ENCODE measurements at regions of chr17 and their contacts with region 1.

Region 1: DNA sequence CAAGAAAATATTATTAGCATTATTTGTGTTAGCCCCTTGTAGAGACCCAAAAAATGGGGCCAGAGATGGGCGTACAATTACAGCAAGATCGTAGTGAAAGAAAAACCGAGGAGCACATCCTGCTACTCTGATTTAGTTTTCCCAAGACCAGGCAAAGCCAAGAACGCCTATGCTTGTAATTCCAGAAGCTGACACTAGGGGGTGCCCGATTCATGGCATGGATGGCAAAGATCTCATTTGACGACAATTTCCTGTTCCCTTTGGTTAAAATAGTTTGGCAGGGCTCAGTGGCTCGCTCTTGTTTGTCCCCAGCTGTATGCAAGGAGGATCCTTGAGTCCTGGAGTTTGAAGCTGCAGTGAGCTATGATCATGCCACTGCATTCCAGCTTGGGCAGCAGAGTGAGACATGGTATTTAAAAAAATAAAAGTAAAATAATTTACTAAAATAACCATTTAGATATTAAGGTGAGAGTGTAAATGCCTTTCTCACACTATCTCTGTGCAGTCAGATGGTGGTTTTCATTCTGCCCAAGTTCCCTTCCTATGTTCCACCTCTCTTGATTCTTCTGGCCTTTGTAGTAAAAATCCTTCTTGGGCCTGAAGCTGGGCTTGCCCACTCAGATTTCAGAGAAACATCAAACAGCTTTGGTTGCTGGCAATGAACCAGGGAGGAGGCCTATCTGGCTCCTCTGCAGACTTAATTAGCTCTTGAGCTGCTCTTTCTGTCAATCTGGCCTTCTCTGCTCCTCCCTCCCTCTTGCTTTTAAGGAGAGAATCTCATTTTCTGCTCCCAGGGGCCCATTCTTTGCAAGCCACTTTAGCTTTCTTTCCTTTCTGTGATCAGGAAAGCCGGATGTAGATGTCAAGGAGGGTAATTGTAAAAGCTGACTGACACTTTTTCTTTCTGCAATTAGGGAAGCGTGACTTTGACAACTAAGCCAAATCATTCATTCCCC is 31.2 kb downstream of the TMEM238L start:
- DNase-seq: peak; percentile 53 to 97
- H3K4me3 ChIP-seq: no peak overlapping the region
- H3K27ac ChIP-seq: no peak overlapping the region
- H3K4me1 ChIP-seq: no peaks in the 10 kb centered on the region; a peak in 1 of 7 replicates
- H3K27me3 ChIP-seq: no peaks in the 10 kb centered on the region
- CTCF ChIP-seq: peak; percentile 64 to 95 (median 84)
- EP300 ChIP-seq: no peak
- POLR2A ChIP-seq: no peak
- RAD21 ChIP-seq: peak; percentile 88 to 91

Region 2: GRCh38 chr17:10737168-10737622 is 35.5 kb before region 1 on chr17:
- CTCF ChIA-PET with region 1: interaction called, 29 read pairs
- POLR2A ChIA-PET with region 1: no interaction called
- DNase-seq: peak in 1 of 2 experiments; percentile 66
- H3K4me3 ChIP-seq: no peak overlapping the region
- H3K27ac ChIP-seq: no peak overlapping the region
- H3K4me1 ChIP-seq: no peaks in the 10 kb centered on the region
- H3K27me3 ChIP-seq: no peaks in the 10 kb centered on the region
- CTCF ChIP-seq: peak; percentile 68 to 81 (median 80)
- EP300 ChIP-seq: no peak
- POLR2A ChIP-seq: no peak
- RAD21 ChIP-seq: peak; percentile 94

Region 3: DNA sequence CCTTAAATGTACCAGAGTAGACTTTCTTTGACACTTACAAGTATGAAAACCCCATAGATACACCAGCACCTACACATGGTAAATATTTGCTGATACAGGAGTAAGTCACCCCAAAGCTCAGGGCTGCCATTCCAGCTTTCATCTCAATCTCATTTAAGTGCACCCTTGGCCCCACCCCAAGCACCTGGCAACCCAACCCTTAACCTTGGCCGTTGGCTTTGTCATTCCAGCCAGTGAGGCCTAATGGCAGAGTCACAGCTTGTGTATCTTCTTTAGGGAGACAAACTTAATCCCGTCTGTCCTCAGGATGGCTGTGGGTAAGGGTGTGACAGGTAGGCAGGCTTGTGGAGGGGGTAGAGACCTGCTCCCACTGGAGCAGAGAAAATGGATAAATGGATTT is 11.4 kb before region 1 on chr17:
- CTCF ChIA-PET with region 1: interaction called, 30 read pairs
- POLR2A ChIA-PET with region 1: no interaction called
- DNase-seq: no peak
- H3K4me3 ChIP-seq: no peak overlapping the region
- H3K27ac ChIP-seq: no peak overlapping the region
- H3K4me1 ChIP-seq: peaks cover 3 to 12% (median 5%) of the 10 kb centered on the region in 4 experiments; a peak in 6 of 7 replicates
- H3K27me3 ChIP-seq: no peaks in the 10 kb centered on the region
- CTCF ChIP-seq: no peak
- EP300 ChIP-seq: no peak
- POLR2A ChIP-seq: no peak
- RAD21 ChIP-seq: no peak

Region 4: DNA sequence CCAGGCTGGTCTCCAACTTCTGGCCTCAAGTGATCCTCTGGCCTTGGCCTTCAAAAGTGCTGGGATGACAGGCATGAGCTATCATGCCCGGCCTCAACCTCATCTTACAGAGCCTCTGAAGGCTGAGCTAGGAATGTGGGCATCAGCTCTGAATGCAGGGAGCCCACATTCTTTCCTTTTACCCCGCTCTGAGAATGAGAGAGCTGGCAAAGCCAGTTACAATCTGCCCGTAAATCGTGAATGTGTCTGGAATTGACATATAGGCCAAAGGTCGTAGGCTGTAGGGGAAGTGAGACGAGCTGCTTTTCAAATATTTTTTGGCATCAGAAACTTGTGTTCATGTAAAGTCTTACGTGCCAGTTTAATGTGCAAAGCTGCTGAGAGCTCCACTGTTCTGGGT is 26.7 kb after region 1 on chr17:
- CTCF ChIA-PET with region 1: interaction called, 10 read pairs
- POLR2A ChIA-PET with region 1: interaction called, 4 read pairs
- DNase-seq: no peak
- H3K4me3 ChIP-seq: no peak overlapping the region
- H3K27ac ChIP-seq: no peak overlapping the region
- H3K4me1 ChIP-seq: peaks cover 0 to 4% (median 1%) of the 10 kb centered on the region in 4 experiments; a peak in 1 of 7 replicates
- H3K27me3 ChIP-seq: no peaks in the 10 kb centered on the region
- CTCF ChIP-seq: no peak
- EP300 ChIP-seq: no peak
- POLR2A ChIP-seq: no peak
- RAD21 ChIP-seq: no peak

Region 5: DNA sequence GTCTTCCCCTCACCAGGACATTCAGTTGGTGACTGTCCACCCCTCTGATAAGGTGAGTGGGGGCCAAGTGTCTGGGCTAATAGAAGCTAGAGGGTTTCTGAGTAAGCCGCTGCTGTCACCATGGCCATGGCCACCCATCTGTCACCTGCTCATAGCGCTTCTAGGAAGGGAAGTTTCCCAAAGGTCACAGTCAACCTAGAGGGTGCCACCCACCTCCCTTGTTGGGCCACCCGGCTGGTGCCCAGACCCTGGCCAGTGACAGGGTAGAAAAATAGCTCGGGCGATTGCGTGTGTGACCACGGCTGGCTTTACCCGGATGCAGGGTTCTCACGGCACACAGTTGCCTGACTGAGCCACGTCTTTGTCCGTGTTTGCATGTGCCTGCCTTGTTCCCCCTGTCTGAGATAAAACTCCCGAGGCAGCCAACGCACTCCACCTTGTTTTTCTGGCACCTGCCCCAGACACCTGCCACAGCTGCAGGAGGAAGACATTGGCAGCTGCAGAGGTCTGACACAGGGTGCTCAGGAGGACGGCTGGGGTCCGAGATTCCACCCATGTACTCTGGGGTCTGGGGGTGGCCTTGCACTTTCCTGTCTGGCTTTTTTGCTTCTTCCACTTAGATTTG is 64.4 kb after region 1 on chr17:
- CTCF ChIA-PET with region 1: interaction called, 57 read pairs
- POLR2A ChIA-PET with region 1: interaction called, 3 read pairs
- DNase-seq: no peak
- H3K4me3 ChIP-seq: no peak overlapping the region
- H3K27ac ChIP-seq: no peak overlapping the region
- H3K4me1 ChIP-seq: peaks cover 0 to 5% (median 0%) of the 10 kb centered on the region in 4 experiments; a peak in 2 of 7 replicates
- H3K27me3 ChIP-seq: no peaks in the 10 kb centered on the region
- CTCF ChIP-seq: no peak
- EP300 ChIP-seq: no peak
- POLR2A ChIP-seq: no peak
- RAD21 ChIP-seq: no peak

Region 6: DNA sequence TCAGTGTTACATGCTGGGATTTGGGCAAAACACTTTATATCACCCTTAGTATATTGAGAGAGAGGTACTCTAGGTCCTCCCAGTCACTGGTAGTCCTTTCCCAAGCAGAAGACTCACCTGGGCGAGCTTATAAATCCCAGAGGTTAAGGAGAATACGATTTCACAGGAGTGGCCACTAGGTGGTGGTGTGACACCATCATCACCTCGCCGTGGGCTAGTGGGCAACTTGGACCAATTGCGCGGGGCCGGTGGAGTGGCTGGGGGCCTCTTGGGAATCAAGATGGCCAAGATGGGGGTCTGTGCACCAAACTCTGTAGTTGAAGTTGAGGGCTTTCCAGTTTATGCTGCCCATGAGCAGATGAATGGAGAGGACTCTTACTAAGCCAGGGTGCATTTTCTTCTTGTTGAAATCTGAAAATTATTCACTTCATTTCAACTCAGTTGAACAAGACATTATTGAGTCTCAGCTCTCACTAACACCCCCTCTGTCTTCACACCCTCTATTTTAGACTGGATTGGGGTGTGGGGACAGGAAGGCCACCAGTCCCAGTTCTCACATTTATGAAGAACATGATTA is 103.4 kb after region 1 on chr17:
- CTCF ChIA-PET with region 1: interaction called, 18 read pairs
- POLR2A ChIA-PET with region 1: no interaction called
- DNase-seq: peak in 1 of 2 experiments; percentile 88
- H3K4me3 ChIP-seq: no peak overlapping the region
- H3K27ac ChIP-seq: no peak overlapping the region
- H3K4me1 ChIP-seq: no peaks in the 10 kb centered on the region
- H3K27me3 ChIP-seq: no peaks in the 10 kb centered on the region
- CTCF ChIP-seq: peak; percentile 74 to 83 (median 75)
- EP300 ChIP-seq: no peak
- POLR2A ChIP-seq: no peak
- RAD21 ChIP-seq: peak; percentile 91 to 96

Region 7: DNA sequence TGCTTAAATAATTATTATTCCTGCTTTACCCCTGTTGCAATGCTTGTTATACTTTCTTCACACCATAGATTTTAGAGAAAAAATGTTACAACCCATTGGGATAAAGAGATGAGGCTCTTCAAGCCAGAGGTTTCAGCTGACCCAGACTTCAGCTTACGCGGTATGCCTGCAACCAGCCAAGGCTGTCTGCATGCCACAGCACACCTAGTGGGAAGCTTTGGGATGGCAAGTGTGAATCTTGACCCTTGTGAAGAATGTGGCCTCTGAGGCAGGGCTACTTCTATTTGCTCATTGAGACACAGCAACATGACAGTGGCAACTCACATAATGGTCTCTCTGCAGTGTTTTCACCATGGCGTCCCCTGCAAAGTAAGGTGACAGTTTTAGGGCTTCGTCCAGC is 259.1 kb after region 1 on chr17:
- CTCF ChIA-PET with region 1: no interaction called
- POLR2A ChIA-PET with region 1: no interaction called
- DNase-seq: peak; percentile 17 to 72
- H3K4me3 ChIP-seq: no peak overlapping the region
- H3K27ac ChIP-seq: no peak overlapping the region
- H3K4me1 ChIP-seq: peaks cover 0 to 6% (median 0%) of the 10 kb centered on the region in 4 experiments; a peak in 1 of 7 replicates
- H3K27me3 ChIP-seq: no peaks in the 10 kb centered on the region
- CTCF ChIP-seq: peak; percentile 58 to 94 (median 81)
- EP300 ChIP-seq: no peak
- POLR2A ChIP-seq: no peak
- RAD21 ChIP-seq: peak; percentile 64 to 73

Measured in H1 (cell line).